HCT116 (cell line): ENCODE measurements at regions of chr20 and their contacts with region 1.

Region 1: GRCh38 chr20:38057351-38057972 is 23.9 kb downstream of the RPRD1B start:
- DNase-seq: peak; percentile 58
- ATAC-seq: peak; percentile 99
- H3K4me3 ChIP-seq: no peak overlapping the region
- H3K27ac ChIP-seq: no peak overlapping the region
- H3K4me1 ChIP-seq: no peaks in the 10 kb centered on the region
- H3K27me3 ChIP-seq: no peaks in the 10 kb centered on the region
- CTCF ChIP-seq: peak; percentile 82 to 93 (median 89)
- POLR2A ChIP-seq: no peak
- RAD21 ChIP-seq: peak; percentile 83

Region 2: GRCh38 chr20:38073307-38074071 is 16.0 kb after region 1 on chr20:
- CTCF ChIA-PET with region 1: interaction called, 17 read pairs
- POLR2A ChIA-PET with region 1: no interaction called
- RAD21 ChIA-PET with region 1: no interaction called
- intact Hi-C with region 1: no loop called
- DNase-seq: peak; percentile 24
- ATAC-seq: peak; percentile 80
- H3K4me3 ChIP-seq: no peak overlapping the region
- H3K27ac ChIP-seq: no peak overlapping the region
- H3K4me1 ChIP-seq: no peaks in the 10 kb centered on the region
- H3K27me3 ChIP-seq: no peaks in the 10 kb centered on the region
- CTCF ChIP-seq: peak; percentile 57 to 78 (median 69); a peak in 5 of 6 replicates
- POLR2A ChIP-seq: no peak
- RAD21 ChIP-seq: peak; percentile 51; the same call in 1 of the 2 replicates

Region 3: GRCh38 chr20:38221119-38221589 is 163.7 kb after region 1 on chr20:
- CTCF ChIA-PET with region 1: interaction called, 53 read pairs
- POLR2A ChIA-PET with region 1: interaction called, 4 read pairs
- RAD21 ChIA-PET with region 1: interaction called, 7 to 9 read pairs
- intact Hi-C with region 1: loop called (anchors 1 kb)
- DNase-seq: peak; percentile 46
- ATAC-seq: peak; percentile 79
- H3K4me3 ChIP-seq: no peak overlapping the region
- H3K27ac ChIP-seq: no peak overlapping the region
- H3K4me1 ChIP-seq: peaks cover 8 to 34% of the 10 kb centered on the region in 2 experiments
- H3K27me3 ChIP-seq: no peaks in the 10 kb centered on the region
- CTCF ChIP-seq: peak; percentile 92 to 96 (median 96)
- POLR2A ChIP-seq: no peak
- RAD21 ChIP-seq: peak; percentile 95

Region 4: GRCh38 chr20:38270869-38271605 is 213.6 kb after region 1 on chr20:
- CTCF ChIA-PET with region 1: no interaction called
- POLR2A ChIA-PET with region 1: no interaction called
- RAD21 ChIA-PET with region 1: no interaction called
- intact Hi-C with region 1: no loop called
- DNase-seq: peak; percentile 26
- ATAC-seq: peak; percentile 72
- H3K4me3 ChIP-seq: no peak overlapping the region
- H3K27ac ChIP-seq: no peak overlapping the region
- H3K4me1 ChIP-seq: peaks cover 18 to 39% of the 10 kb centered on the region in 2 experiments
- H3K27me3 ChIP-seq: no peaks in the 10 kb centered on the region
- CTCF ChIP-seq: no peak
- POLR2A ChIP-seq: no peak
- RAD21 ChIP-seq: no peak

Region 5: DNA sequence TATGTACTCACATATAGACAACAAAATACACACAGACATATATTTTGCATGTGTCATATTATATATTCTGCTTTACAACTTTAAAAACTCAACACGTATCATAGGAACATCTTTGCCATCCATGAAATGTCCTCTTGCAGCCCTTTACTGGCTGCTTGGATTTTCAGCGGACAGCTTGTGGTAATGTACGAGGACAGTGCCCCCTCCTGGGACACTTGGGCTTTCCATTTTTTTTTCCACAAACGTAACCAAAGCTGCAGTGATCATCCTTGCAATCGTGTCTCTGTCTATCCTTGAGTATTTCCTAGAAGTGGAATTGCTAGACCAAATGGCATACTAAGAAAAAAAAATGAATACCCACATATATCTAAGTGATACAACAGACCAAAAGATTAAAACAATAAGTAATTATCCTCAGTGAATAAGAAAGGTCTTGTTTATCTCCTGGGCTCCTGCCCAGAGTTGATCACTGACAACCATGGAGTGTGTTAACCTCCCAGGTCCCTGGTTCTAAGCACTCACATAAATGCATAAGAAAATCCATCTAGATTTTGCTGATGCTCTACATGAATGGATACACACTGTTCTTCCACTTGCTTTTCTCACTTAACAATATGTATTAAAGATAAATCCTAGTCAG is 264.6 kb after region 1 on chr20:
- CTCF ChIA-PET with region 1: interaction called, 4 read pairs
- POLR2A ChIA-PET with region 1: no interaction called
- RAD21 ChIA-PET with region 1: no interaction called
- intact Hi-C with region 1: loop called (anchors 2 kb)
- DNase-seq: peak; percentile 26
- ATAC-seq: peak; percentile 86
- H3K4me3 ChIP-seq: no peak overlapping the region
- H3K27ac ChIP-seq: no peak overlapping the region
- H3K4me1 ChIP-seq: no peaks in the 10 kb centered on the region
- H3K27me3 ChIP-seq: peaks cover 6% of the 10 kb centered on the region
- CTCF ChIP-seq: peak; percentile 56 to 78 (median 56); a peak in 5 of 6 replicates
- POLR2A ChIP-seq: no peak
- RAD21 ChIP-seq: peak; percentile 60

Region 6: GRCh38 chr20:38412877-38413577 is 355.6 kb after region 1 on chr20:
- CTCF ChIA-PET with region 1: interaction called, 13 read pairs
- POLR2A ChIA-PET with region 1: no interaction called
- RAD21 ChIA-PET with region 1: interaction called in 1 of 2 experiments, 4 read pairs
- intact Hi-C with region 1: loop called (anchors 5 kb)
- DNase-seq: no peak
- ATAC-seq: no peak
- H3K4me3 ChIP-seq: no peak overlapping the region
- H3K27ac ChIP-seq: no peak overlapping the region
- H3K4me1 ChIP-seq: no peaks in the 10 kb centered on the region; a peak in 1 of 4 replicates
- H3K27me3 ChIP-seq: no peaks in the 10 kb centered on the region
- CTCF ChIP-seq: no peak
- POLR2A ChIP-seq: no peak
- RAD21 ChIP-seq: no peak